Right cardiac atrium (tissue), 5 donors: ENCODE measurements at regions of chr15 and their contacts with region 1.

Region 1: GRCh38 chr15:68820295-68821189 is at the start of gene ANP32A:
- DNase-seq: peak; percentile 97 to 99 (median 99)
- ATAC-seq: peak; percentile 88 to 89
- H3K4me3 ChIP-seq: peak within 1 kb of the TSS; percentile 98
- H3K27ac ChIP-seq: peak within 1 kb of the TSS; percentile 99
- H3K4me1 ChIP-seq: peaks cover 7% of the 10 kb centered on the region
- H3K27me3 ChIP-seq: no peaks in the 10 kb centered on the region
- total RNA-seq, gene ANP32A: 104 to 145 (median 122) TPM

Region 2: DNA sequence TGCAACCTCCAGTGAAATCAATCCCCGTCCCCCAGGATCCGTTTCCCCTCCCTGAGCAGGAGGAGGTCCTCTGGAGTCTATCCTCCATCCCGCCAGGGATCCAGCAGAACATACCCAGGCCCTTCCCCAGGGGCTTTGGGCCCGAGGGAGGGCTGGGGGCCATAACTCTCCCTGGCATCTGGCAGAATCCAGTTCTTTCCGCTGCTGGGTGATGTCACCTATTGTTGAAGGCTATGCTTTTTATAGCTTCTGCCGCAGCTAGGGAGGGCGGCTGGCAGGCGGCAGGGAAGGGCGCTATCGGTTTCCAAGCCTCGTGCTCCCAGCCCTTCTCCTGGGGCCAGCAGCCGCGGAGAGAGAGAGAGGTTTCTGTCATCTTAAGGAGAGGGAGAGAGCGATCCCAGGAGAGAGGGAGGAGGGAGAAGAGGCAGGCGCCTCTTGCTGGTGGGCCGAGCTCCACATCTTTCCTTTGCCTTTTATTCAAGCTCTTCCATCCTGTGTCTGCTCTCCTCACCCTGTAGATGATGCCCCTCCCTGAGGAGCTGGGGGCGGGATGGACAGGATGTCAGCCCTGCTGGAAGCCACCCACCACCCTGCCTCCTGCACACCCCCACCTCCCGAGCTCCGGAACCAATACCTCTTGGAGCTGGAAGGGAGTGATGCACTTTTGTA is 120.0 kb before region 1 on chr15:
- intact Hi-C with region 1: loop called in 1 of 4 experiments (anchors 10 kb)
- DNase-seq: peak; percentile 73 to 88 (median 86)
- ATAC-seq: peak; percentile 74 to 83
- H3K4me3 ChIP-seq: no peak overlapping the region
- H3K27ac ChIP-seq: peak overlapping the region; percentile 68
- H3K4me1 ChIP-seq: peaks cover 15% of the 10 kb centered on the region
- H3K27me3 ChIP-seq: no peaks in the 10 kb centered on the region

Region 3: GRCh38 chr15:68730471-68730919 is 90.0 kb before region 1 on chr15:
- intact Hi-C with region 1: loop called in 1 of 4 experiments (anchors 10 kb)
- DNase-seq: peak in 2 of 3 donors; percentile 46 to 75
- ATAC-seq: peak; percentile 27 to 62
- H3K4me3 ChIP-seq: no peak overlapping the region
- H3K27ac ChIP-seq: peak overlapping the region; percentile 76
- H3K4me1 ChIP-seq: peaks cover 14% of the 10 kb centered on the region
- H3K27me3 ChIP-seq: no peaks in the 10 kb centered on the region

Region 4: GRCh38 chr15:68783226-68784058 is 37.1 kb before region 1 on chr15:
- intact Hi-C with region 1: loop called in 1 of 4 experiments (anchors 5 kb)
- DNase-seq: peak in 1 of 3 donors; percentile 76
- ATAC-seq: peak; percentile 12 to 16
- H3K4me3 ChIP-seq: no peak overlapping the region
- H3K27ac ChIP-seq: no peak overlapping the region
- H3K4me1 ChIP-seq: no peaks in the 10 kb centered on the region
- H3K27me3 ChIP-seq: no peaks in the 10 kb centered on the region

Region 5: DNA sequence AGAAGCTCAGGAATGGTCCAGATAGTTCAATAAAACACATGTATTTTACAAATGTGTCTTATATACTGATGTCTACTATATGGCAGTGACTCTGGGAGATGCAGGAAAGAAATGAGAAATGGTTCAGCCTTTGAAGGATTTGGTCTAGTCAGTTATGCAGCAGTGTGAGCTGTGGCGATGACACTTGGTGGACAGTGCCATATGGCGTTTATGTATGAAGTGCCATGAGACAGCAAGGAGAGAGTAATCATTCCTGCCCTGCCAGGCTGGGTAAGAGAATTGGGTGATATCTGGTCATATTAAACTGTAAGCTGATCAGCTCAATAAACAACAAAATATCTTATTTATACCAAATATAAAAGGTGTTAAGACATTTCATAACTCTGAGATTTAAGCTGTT is 47.8 kb after region 1 on chr15:
- intact Hi-C with region 1: no loop called
- DNase-seq: no peak
- ATAC-seq: no peak
- H3K4me3 ChIP-seq: no peak overlapping the region
- H3K27ac ChIP-seq: no peak overlapping the region
- H3K4me1 ChIP-seq: no peaks in the 10 kb centered on the region
- H3K27me3 ChIP-seq: no peaks in the 10 kb centered on the region